ENCODE measurements at regions of chr21 and their contacts with region 1.

Region 1: GRCh38 chr21:39705849-39706248 is 39.1 kb upstream of the IGSF5 start:
- DNase-seq: no peak
- ATAC-seq: no peak
- H3K4me3 Mint-ChIP-seq: no peak overlapping the region
- H3K27ac Mint-ChIP-seq: peak overlapping the region; percentile 96
- H3K4me1 Mint-ChIP-seq: peaks cover 57% of the 10 kb centered on the region
- H3K27me3 Mint-ChIP-seq: peaks cover 2% of the 10 kb centered on the region; the same call in 1 of the 2 replicates
- CTCF ChIP-seq: no peak

Region 2: DNA sequence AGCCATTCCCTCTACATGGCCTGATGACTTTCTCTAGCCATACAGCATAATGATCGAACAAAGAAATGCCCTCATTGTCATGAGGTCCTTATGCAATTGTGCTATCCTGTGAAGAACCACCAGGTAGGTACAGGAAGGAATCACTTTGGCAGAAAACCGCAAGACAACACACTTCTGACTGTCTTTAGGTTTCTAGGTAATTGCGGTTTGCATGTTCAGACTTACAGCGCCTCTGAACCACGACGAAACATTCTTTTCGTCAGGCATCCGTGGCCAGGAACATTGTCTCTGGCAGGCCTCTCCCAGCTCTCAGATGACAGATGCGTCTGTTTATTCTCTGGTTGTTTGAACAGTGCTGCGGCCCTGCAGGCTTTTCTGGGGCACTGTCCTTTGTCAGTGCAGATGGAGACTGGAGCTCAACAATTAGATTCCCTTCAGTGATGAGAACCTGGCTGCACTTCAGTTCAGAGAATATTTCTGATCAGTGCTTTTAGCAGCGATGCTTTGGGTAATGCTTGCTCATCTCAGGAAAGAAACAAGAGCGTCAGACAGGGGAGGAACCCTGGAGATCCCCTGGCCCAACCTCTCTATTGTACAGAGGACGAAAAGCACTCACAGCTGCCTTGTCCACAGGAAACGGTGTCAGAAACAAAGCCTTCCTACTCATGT is 29.7 kb before region 1 on chr21:
- CTCF ChIA-PET with region 1: interaction called, 13 read pairs
- POLR2A ChIA-PET with region 1: no interaction called
- DNase-seq: no peak
- ATAC-seq: peak; percentile 53
- H3K4me3 Mint-ChIP-seq: no peak overlapping the region
- H3K27ac Mint-ChIP-seq: peak overlapping the region; percentile 24
- H3K4me1 Mint-ChIP-seq: peaks cover 37% of the 10 kb centered on the region
- H3K27me3 Mint-ChIP-seq: no peaks in the 10 kb centered on the region
- CTCF ChIP-seq: no peak

Region 3: GRCh38 chr21:39730418-39731170 is 24.7 kb after region 1 on chr21:
- CTCF ChIA-PET with region 1: no interaction called
- POLR2A ChIA-PET with region 1: no interaction called
- DNase-seq: no peak
- ATAC-seq: no peak
- H3K4me3 Mint-ChIP-seq: no peak overlapping the region
- H3K27ac Mint-ChIP-seq: no peak overlapping the region
- H3K4me1 Mint-ChIP-seq: peaks cover 5% of the 10 kb centered on the region
- H3K27me3 Mint-ChIP-seq: no peaks in the 10 kb centered on the region
- CTCF ChIP-seq: no peak

Region 4: DNA sequence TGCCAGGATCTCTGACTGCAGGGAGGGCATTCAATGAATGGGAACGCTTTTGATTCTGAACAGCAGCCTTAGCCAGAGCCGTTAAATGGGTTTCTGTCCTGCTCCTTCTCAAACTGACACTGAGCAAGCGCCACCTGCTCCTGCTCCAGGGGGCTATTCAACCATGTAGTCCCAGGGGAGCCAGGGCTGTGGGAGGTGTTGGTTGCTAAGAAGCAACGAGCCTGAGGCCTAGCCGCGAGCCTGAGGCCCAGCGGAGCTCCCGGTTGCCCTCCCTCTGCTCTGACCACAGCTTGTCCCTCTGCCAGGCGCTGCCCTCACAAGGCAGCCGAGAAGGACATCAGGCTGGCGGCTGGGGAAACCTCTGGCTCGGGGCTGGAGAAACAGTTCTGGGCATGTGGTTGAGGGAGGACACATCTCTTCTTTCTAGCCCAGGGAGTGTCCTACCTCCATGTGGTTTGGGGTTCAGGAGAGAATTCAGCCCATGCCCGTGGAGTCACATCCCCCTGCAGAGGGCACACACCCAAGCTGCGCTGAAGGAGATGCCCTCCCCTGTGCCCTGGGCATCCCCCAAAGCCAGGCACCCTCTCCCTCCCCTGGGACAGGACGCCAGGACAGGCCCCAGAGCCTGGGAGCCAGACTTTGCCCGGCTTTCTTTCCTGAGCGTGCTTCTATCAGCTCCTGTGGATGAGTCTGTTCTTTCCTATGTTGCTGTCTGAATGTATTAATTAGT is 179.4 kb after region 1 on chr21:
- CTCF ChIA-PET with region 1: no interaction called
- POLR2A ChIA-PET with region 1: no interaction called
- DNase-seq: no peak
- ATAC-seq: no peak
- H3K4me3 Mint-ChIP-seq: no peak overlapping the region
- H3K27ac Mint-ChIP-seq: no peak overlapping the region
- H3K4me1 Mint-ChIP-seq: no peaks in the 10 kb centered on the region
- H3K27me3 Mint-ChIP-seq: no peaks in the 10 kb centered on the region
- CTCF ChIP-seq: no peak